Dendritic cell treated with granulocyte-macrophage colony-stimulating factor and Interleukin-4, amounts not matched to agents 40 ng/mL and 50 ng/mL, for 4 days (primary cell): ENCODE measurements at regions of chr9 and their contacts with region 1.

Region 1: GRCh38 chr9:90842996-90843395 is 41.4 kb downstream of the SYK start:
- H3K4me3 Mint-ChIP-seq: no peak overlapping the region
- H3K27ac Mint-ChIP-seq: no peak overlapping the region
- H3K4me1 Mint-ChIP-seq: peaks cover 23% of the 10 kb centered on the region
- H3K27me3 Mint-ChIP-seq: no peaks in the 10 kb centered on the region

Region 2: GRCh38 chr9:90477535-90477934 is 365.5 kb before region 1 on chr9:
- intact Hi-C with region 1: no loop called
- H3K4me3 Mint-ChIP-seq: no peak overlapping the region
- H3K27ac Mint-ChIP-seq: no peak overlapping the region
- H3K4me1 Mint-ChIP-seq: no peaks in the 10 kb centered on the region
- H3K27me3 Mint-ChIP-seq: peaks cover 12% of the 10 kb centered on the region

Region 3: GRCh38 chr9:90808890-90809685 is 33.9 kb before region 1 on chr9:
- intact Hi-C with region 1: loop called (anchors 5 kb)
- H3K4me3 Mint-ChIP-seq: peak overlapping the region; percentile 57
- H3K27ac Mint-ChIP-seq: peak overlapping the region; percentile 83
- H3K4me1 Mint-ChIP-seq: peaks cover 94% of the 10 kb centered on the region
- H3K27me3 Mint-ChIP-seq: no peaks in the 10 kb centered on the region

Region 4: DNA sequence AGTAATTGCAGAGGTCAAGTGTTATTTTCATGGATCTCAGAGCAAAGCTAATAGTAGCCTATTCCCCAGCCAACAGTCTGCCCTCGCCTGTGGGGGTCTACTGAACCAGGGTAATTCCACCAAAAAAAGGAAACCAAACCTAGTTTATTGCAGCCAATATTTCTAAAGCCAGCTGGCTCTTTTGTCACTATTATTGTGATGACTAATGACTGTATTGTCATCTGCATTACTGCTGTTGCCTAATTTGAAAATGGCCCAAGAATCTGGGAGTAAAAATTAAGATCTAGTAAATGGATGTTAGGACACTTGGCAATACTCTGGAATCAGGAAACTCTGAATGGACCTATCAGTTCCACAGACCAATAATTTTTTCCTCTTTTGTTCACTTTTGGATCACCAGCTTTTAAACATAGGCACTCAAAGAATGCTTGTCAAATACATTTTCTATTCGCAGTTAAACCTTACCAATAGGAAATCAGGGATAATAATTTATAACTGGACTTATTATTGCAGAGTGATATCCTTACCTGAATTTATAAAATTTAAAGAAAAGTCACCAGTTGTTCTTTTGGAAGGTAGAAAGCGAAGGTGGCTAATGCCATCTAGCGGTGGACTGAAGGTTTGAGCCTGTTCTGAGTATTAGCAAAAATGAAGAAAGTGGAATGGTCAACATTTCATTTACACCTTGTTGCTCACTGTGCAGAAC is 27.8 kb after region 1 on chr9:
- intact Hi-C with region 1: no loop called
- H3K4me3 Mint-ChIP-seq: no peak overlapping the region
- H3K27ac Mint-ChIP-seq: no peak overlapping the region
- H3K4me1 Mint-ChIP-seq: peaks cover 9% of the 10 kb centered on the region
- H3K27me3 Mint-ChIP-seq: no peaks in the 10 kb centered on the region

Region 5: GRCh38 chr9:90946975-90947374 is 104.0 kb after region 1 on chr9:
- intact Hi-C with region 1: no loop called
- H3K4me3 Mint-ChIP-seq: no peak overlapping the region
- H3K27ac Mint-ChIP-seq: no peak overlapping the region
- H3K4me1 Mint-ChIP-seq: no peaks in the 10 kb centered on the region
- H3K27me3 Mint-ChIP-seq: peaks cover 23% of the 10 kb centered on the region